Sciatic nerve (tissue), 2 donors: ENCODE measurements at regions of chr16 and their contacts with region 1.

Region 1: DNA sequence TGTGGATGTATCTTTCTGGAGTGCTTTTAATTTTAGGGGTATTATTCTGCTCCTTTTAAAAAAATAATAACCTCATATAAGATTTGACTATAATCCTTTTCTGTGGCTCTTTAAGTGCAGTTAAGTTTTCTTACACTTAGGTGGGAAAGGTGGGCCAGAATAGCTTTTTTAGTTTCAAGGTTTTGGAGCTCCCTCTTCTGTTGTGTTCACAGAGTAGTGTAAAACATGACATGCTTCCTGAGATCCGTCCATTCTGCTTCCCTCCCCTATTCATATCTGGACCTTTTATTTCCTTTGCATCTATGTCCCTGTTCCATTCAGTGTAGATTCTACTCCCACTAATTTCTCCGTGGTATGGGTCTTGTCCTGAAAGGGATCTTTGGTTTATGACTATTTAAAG is 12.8 kb downstream of the LRRC36 start:
- DNase-seq: no peak
- ATAC-seq: no peak

Region 2: GRCh38 chr16:67296422-67296821 is 43.0 kb before region 1 on chr16:
- intact Hi-C with region 1: loop called (anchors 2 kb)
- DNase-seq: no peak
- ATAC-seq: no peak

Region 3: GRCh38 chr16:67326472-67327309 is 12.8 kb before region 1 on chr16 and contains the starts of genes KCTD19 and LRRC36:
- intact Hi-C with region 1: loop called (anchors 1 kb)
- DNase-seq: peak; percentile 77
- ATAC-seq: peak; percentile 81
- total RNA-seq, gene KCTD19: 0.53 TPM
- total RNA-seq, gene LRRC36: 1.5 TPM

Region 4: DNA sequence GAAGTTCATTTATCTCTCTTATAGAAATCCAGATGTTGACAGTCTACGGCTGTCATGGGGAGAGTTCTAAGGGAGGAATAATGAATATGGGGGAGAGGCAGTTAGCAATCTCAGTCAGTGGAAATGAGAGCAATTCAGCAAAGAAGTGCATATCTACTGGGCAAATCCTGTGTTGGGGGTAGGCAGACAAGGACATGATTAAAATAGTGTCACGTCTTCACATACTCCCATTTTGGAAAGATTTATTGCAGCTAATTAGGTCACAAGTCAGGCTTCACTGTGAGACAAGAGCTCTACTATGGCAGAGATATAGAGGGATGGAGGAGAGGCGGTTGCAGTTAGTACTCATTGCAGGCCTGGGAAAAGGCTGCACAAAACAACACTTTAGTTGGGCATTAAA is 16.9 kb after region 1 on chr16:
- intact Hi-C with region 1: no loop called
- DNase-seq: no peak
- ATAC-seq: no peak